Heart left ventricle (tissue), 16 donors: ENCODE measurements at regions of chr1 and their contacts with region 1.

Region 1: GRCh38 chr1:58816072-58816746 is 32.4 kb upstream of the JUN start:
- DNase-seq: peak; percentile 92 to 96 (median 94)
- ATAC-seq: peak; percentile 80 to 93 (median 90)
- H3K4me3 ChIP-seq: peak overlapping the region; percentile 32 to 71 (median 64)
- H3K27ac ChIP-seq: peak overlapping the region; percentile 87 to 96 (median 92)
- H3K4me1 ChIP-seq: peaks cover 0 to 59% (median 20%) of the 10 kb centered on the region in 12 donors
- H3K27me3 ChIP-seq: no peaks in the 10 kb centered on the region
- CTCF ChIP-seq: peak in 3 of 12 donors; percentile 19 to 30 (median 26)
- POLR2A ChIP-seq: peak in 1 of 2 donors; percentile 55

Region 2: GRCh38 chr1:58883037-58883887 is 67.1 kb after region 1 on chr1:
- intact Hi-C with region 1: loop called in 4 of 10 experiments (anchors 5 kb)
- DNase-seq: peak; percentile 65 to 87 (median 72)
- ATAC-seq: peak; percentile 38 to 85 (median 73)
- H3K4me3 ChIP-seq: no peak overlapping the region
- H3K27ac ChIP-seq: peak overlapping the region; percentile 11 to 85 (median 70)
- H3K4me1 ChIP-seq: peaks cover 5 to 73% (median 43%) of the 10 kb centered on the region in 12 donors
- H3K27me3 ChIP-seq: no peaks in the 10 kb centered on the region
- CTCF ChIP-seq: no peak
- POLR2A ChIP-seq: no peak

Region 3: GRCh38 chr1:59076612-59077011 is 260.4 kb after region 1 on chr1:
- intact Hi-C with region 1: loop called in 1 of 10 experiments (anchors 10 kb)
- DNase-seq: no peak
- ATAC-seq: peak in 1 of 4 donors; percentile 14
- H3K4me3 ChIP-seq: no peak overlapping the region
- H3K27ac ChIP-seq: no peak overlapping the region
- H3K4me1 ChIP-seq: peaks cover 0 to 28% (median 6%) of the 10 kb centered on the region in 12 donors
- H3K27me3 ChIP-seq: no peaks in the 10 kb centered on the region
- CTCF ChIP-seq: peak in 8 of 12 donors; percentile 11 to 44 (median 22)
- POLR2A ChIP-seq: no peak